CD14-positive monocyte (primary cell): ENCODE measurements at regions of chr7 and their contacts with region 1.

Region 1: GRCh38 chr7:131231381-131232220 is 96.1 kb upstream of the MKLN1 start:
- DNase-seq: peak; percentile 67 to 85 (median 69)
- H3K4me3 ChIP-seq: peak overlapping the region; percentile 36 to 68 (median 39)
- H3K4me3 Mint-ChIP-seq: peak overlapping the region; percentile 60 to 88
- H3K27ac ChIP-seq: peak overlapping the region; percentile 95 to 96
- H3K27ac Mint-ChIP-seq: peak overlapping the region; percentile 95 to 100 (median 96)
- H3K4me1 ChIP-seq: peaks cover 28 to 46% of the 10 kb centered on the region in 2 donors
- H3K4me1 Mint-ChIP-seq: peaks cover 53% of the 10 kb centered on the region
- H3K27me3 ChIP-seq: no peaks in the 10 kb centered on the region
- H3K27me3 Mint-ChIP-seq: peaks cover 1 to 2% (median 2%) of the 10 kb centered on the region in 3 donors
- CTCF ChIP-seq: no peak

Region 2: DNA sequence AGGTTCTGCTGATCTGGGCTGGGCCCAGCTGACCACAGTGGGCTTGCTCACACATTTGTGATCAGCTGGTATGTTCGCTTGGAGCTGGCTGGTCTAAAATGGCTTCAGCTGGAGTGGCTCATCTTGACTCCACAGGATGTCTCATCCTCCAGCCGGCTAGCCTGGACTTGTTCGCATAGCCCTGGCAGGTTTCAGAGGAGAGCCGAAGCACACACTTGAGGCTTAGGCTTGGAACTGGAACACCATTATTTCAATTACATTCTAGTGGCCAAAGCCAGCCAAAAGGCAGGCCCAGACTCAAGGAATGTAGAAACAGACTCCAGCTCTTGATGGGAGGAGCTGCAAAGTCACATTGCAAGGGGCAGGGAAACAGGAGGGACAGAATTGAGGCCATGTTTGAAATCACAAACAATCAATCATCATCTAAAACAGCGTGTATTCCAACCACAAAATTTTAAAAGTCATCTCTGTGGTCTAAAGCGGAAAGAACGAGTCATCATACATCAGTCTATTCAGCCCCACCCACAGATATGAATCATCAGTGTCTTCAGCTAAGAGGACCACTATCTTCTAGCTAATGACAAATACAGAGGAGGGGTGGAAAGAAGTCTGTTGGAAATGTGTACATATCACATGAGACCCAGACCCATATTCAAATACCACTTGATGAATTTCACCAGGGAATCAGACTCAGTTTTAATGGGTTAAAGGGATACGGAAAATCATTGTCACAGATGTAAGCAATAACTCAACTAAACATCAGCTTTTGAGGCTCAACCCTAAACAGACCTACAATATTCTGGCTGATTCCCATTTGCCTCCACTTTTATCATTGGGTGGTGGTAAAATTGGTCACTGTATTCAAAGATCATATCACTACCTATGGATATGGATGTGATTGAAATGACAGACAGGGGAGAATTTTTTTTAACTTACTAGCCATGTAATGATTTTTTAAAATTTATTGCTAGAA is 42.9 kb before region 1 on chr7:
- intact Hi-C with region 1: loop called in 1 of 2 experiments (anchors 10 kb)
- DNase-seq: peak; percentile 91 to 98 (median 96)
- H3K4me3 ChIP-seq: no peak overlapping the region
- H3K4me3 Mint-ChIP-seq: peak overlapping the region in 1 of 2 donors; percentile 62
- H3K27ac ChIP-seq: peak overlapping the region; percentile 62 to 85
- H3K27ac Mint-ChIP-seq: peak overlapping the region; percentile 89 to 96 (median 94)
- H3K4me1 ChIP-seq: peaks cover 18 to 35% of the 10 kb centered on the region in 2 donors
- H3K4me1 Mint-ChIP-seq: peaks cover 37% of the 10 kb centered on the region
- H3K27me3 ChIP-seq: peaks cover 11 to 24% of the 10 kb centered on the region in 2 donors
- H3K27me3 Mint-ChIP-seq: peaks cover 28 to 40% (median 33%) of the 10 kb centered on the region in 3 donors
- CTCF ChIP-seq: no peak

Region 3: GRCh38 chr7:131327626-131328376 is 96.2 kb after region 1 on chr7 and contains the start of gene MKLN1:
- intact Hi-C with region 1: loop called (anchors 5 kb)
- DNase-seq: peak; percentile 82 to 89 (median 86)
- H3K4me3 ChIP-seq: peak within 1 kb of the TSS; percentile 69 to 98 (median 88)
- H3K4me3 Mint-ChIP-seq: peak within 1 kb of the TSS; percentile 99 to 100
- H3K27ac ChIP-seq: peak within 1 kb of the TSS; percentile 86 to 99
- H3K27ac Mint-ChIP-seq: peak within 1 kb of the TSS; percentile 96 to 100 (median 99)
- H3K4me1 ChIP-seq: peaks cover 30 to 37% of the 10 kb centered on the region in 2 donors
- H3K4me1 Mint-ChIP-seq: peaks cover 46% of the 10 kb centered on the region
- H3K27me3 ChIP-seq: no peaks in the 10 kb centered on the region
- H3K27me3 Mint-ChIP-seq: peaks cover 0 to 5% (median 0%) of the 10 kb centered on the region in 3 donors
- CTCF ChIP-seq: no peak
- polyA plus RNA-seq, gene MKLN1: 12.2 to 18.5 (median 17.2) TPM

Region 4: DNA sequence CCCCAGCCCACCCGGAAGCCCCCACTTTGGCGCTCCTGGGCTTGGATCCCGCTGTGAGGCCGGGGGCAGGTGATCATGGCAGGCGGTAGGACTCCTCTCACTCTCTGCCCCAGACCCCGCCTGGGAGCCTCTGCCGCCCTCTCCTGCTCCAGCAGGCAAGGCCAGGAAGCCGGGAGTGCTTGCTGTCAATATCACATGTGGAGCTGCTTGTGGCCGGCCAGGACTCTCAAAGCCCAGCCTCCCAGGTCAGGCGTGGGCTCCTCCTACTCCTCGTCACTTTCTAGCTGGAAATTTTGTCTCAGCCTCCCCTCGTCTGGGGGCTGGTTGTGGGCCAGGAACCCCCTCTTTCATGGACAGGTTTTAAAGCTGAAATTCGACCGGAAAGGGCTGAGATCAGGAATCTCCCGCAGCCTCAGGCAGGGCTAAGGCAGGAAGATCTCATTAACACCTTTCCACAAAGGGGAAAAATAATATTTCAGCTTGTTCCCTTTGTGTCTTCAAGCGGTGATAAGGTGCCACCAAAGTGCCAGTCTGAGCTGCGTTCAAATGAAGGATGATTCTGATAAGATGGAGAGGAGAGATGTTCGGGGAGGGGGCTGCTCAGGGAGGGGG is 598.5 kb after region 1 on chr7:
- intact Hi-C with region 1: no loop called
- DNase-seq: no peak
- H3K4me3 ChIP-seq: no peak overlapping the region
- H3K4me3 Mint-ChIP-seq: peak overlapping the region in 1 of 2 donors; percentile 35
- H3K27ac ChIP-seq: no peak overlapping the region
- H3K27ac Mint-ChIP-seq: no peak overlapping the region
- H3K4me1 ChIP-seq: no peaks in the 10 kb centered on the region
- H3K4me1 Mint-ChIP-seq: no peaks in the 10 kb centered on the region
- H3K27me3 ChIP-seq: peaks cover 0 to 6% of the 10 kb centered on the region in 2 donors
- H3K27me3 Mint-ChIP-seq: peaks cover 6 to 14% (median 10%) of the 10 kb centered on the region in 3 donors
- CTCF ChIP-seq: no peak

Region 5: GRCh38 chr7:131931370-131931769 is 699.8 kb after region 1 on chr7:
- intact Hi-C with region 1: no loop called
- DNase-seq: no peak
- H3K4me3 ChIP-seq: no peak overlapping the region
- H3K4me3 Mint-ChIP-seq: no peak overlapping the region
- H3K27ac ChIP-seq: no peak overlapping the region
- H3K27ac Mint-ChIP-seq: no peak overlapping the region
- H3K4me1 ChIP-seq: no peaks in the 10 kb centered on the region
- H3K4me1 Mint-ChIP-seq: no peaks in the 10 kb centered on the region
- H3K27me3 ChIP-seq: no peaks in the 10 kb centered on the region
- H3K27me3 Mint-ChIP-seq: peaks cover 0 to 7% (median 2%) of the 10 kb centered on the region in 3 donors
- CTCF ChIP-seq: no peak